WTC11 (cell line): ENCODE measurements at regions of chr14 and their contacts with region 1.

Region 1: GRCh38 chr14:21917699-21918436 is 244.2 kb upstream of the OR4E1 start:
- DNase-seq: peak; percentile 31
- ATAC-seq: peak; percentile 66
- H3K4me3 Mint-ChIP-seq: no peak overlapping the region
- H3K27ac Mint-ChIP-seq: no peak overlapping the region
- H3K4me1 Mint-ChIP-seq: no peaks in the 10 kb centered on the region
- H3K27me3 Mint-ChIP-seq: peaks cover 10% of the 10 kb centered on the region
- CTCF ChIP-seq: peak; percentile 37; the same call in 1 of the 2 replicates

Region 2: DNA sequence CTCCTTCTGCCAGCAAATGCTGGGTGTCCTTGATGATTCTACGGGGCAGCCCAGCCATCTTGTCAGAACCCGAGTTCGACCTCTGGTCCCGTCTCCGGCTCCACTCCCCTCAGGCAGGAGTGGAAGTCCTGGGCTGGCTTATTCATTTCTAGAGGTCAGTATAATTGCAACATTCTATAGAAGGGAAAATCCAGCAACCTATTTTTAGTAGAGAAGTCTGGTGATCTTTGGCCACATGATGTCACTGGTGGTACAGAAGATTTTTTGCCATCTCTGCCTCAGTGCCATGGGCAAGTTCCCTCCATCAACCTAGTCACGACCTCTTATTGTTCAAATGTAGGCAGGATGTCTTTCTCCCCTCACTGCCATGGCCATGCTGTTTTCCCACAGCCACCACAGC is 305.5 kb before region 1 on chr14:
- CTCF ChIA-PET with region 1: no interaction called
- POLR2A ChIA-PET with region 1: no interaction called
- DNase-seq: no peak
- ATAC-seq: peak; percentile 32; the same call in 1 of the 2 replicates
- H3K4me3 Mint-ChIP-seq: no peak overlapping the region
- H3K27ac Mint-ChIP-seq: no peak overlapping the region
- H3K4me1 Mint-ChIP-seq: peaks cover 16% of the 10 kb centered on the region
- H3K27me3 Mint-ChIP-seq: no peaks in the 10 kb centered on the region
- CTCF ChIP-seq: no peak

Region 3: GRCh38 chr14:21852061-21852664 is 65.7 kb before region 1 on chr14:
- CTCF ChIA-PET with region 1: interaction called, 20 read pairs
- POLR2A ChIA-PET with region 1: no interaction called
- DNase-seq: peak; percentile 77
- ATAC-seq: peak; percentile 83
- H3K4me3 Mint-ChIP-seq: no peak overlapping the region
- H3K27ac Mint-ChIP-seq: no peak overlapping the region
- H3K4me1 Mint-ChIP-seq: no peaks in the 10 kb centered on the region
- H3K27me3 Mint-ChIP-seq: peaks cover 20% of the 10 kb centered on the region
- CTCF ChIP-seq: peak; percentile 30

Region 4: GRCh38 chr14:21894003-21894897 is 23.6 kb before region 1 on chr14:
- CTCF ChIA-PET with region 1: interaction called, 14 read pairs
- POLR2A ChIA-PET with region 1: no interaction called
- DNase-seq: peak; percentile 62
- ATAC-seq: peak; percentile 98
- H3K4me3 Mint-ChIP-seq: no peak overlapping the region
- H3K27ac Mint-ChIP-seq: no peak overlapping the region
- H3K4me1 Mint-ChIP-seq: no peaks in the 10 kb centered on the region
- H3K27me3 Mint-ChIP-seq: no peaks in the 10 kb centered on the region; the same call in 1 of the 2 replicates
- CTCF ChIP-seq: peak; percentile 27; the same call in 1 of the 2 replicates

Region 5: GRCh38 chr14:21902650-21903103 is 15.2 kb before region 1 on chr14:
- CTCF ChIA-PET with region 1: interaction called, 30 read pairs
- POLR2A ChIA-PET with region 1: no interaction called
- DNase-seq: no peak
- ATAC-seq: no peak
- H3K4me3 Mint-ChIP-seq: no peak overlapping the region
- H3K27ac Mint-ChIP-seq: no peak overlapping the region
- H3K4me1 Mint-ChIP-seq: no peaks in the 10 kb centered on the region
- H3K27me3 Mint-ChIP-seq: peaks cover 5% of the 10 kb centered on the region
- CTCF ChIP-seq: no peak

Region 6: GRCh38 chr14:21933681-21934080 is 15.8 kb after region 1 on chr14:
- CTCF ChIA-PET with region 1: interaction called, 30 read pairs
- POLR2A ChIA-PET with region 1: no interaction called
- DNase-seq: no peak
- ATAC-seq: 0 out of 2 replicates have a peak, but pooled peaks have one; percentile 16
- H3K4me3 Mint-ChIP-seq: no peak overlapping the region
- H3K27ac Mint-ChIP-seq: no peak overlapping the region
- H3K4me1 Mint-ChIP-seq: peaks cover 14% of the 10 kb centered on the region
- H3K27me3 Mint-ChIP-seq: no peaks in the 10 kb centered on the region; the same call in 1 of the 2 replicates
- CTCF ChIP-seq: no peak

Region 7: DNA sequence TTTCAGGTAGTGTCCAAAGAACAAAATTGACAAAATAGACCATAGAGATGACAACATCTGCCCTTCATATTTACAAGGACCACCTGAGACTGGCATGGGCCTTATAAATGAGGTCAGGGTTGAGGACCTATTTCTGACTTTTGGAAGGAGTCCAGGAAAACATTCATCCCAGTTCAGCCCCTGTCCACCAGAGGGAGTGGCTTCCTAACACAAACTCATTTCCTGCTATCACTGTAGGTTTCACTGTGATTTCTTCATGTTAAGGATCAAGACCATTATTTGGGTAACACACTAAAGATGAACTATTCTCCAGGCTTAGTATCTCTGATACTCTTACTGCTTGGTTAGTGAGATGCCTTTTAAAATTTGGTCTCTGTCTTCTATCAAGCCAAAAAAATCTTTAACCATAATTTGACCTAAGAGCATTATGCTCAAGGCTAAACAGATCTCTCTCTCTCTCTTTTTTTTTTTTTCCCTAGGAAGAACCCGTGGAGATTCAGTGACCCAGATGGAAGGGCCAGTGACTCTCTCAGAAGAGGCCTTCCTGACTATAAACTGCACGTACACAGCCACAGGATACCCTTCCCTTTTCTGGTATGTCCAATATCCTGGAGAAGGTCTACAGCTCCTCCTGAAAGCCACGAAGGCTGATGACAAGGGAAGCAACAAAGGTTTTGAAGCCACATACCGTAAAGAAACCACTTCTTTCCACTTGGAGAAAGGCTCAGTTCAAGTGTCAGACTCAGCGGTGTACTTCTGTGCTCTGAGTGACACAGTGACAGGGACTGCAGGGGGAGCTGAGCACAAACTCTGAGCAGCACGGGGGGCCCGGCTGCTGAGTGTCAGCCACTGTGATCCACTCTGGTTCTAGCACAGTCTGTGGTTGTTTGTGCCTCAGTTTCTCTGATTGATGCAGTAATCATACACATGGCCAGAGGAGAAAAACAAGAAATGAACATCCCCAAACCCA is 23.3 kb after region 1 on chr14:
- CTCF ChIA-PET with region 1: interaction called, 10 read pairs
- POLR2A ChIA-PET with region 1: no interaction called
- DNase-seq: peak; percentile 36
- ATAC-seq: peak; percentile 76
- H3K4me3 Mint-ChIP-seq: no peak overlapping the region
- H3K27ac Mint-ChIP-seq: no peak overlapping the region
- H3K4me1 Mint-ChIP-seq: peaks cover 13% of the 10 kb centered on the region
- H3K27me3 Mint-ChIP-seq: no peaks in the 10 kb centered on the region; the same call in 1 of the 2 replicates
- CTCF ChIP-seq: peak; percentile 57

Region 8: GRCh38 chr14:21987937-21988336 is 70.1 kb after region 1 on chr14:
- CTCF ChIA-PET with region 1: interaction called, 12 read pairs
- POLR2A ChIA-PET with region 1: no interaction called
- DNase-seq: peak; percentile 27
- ATAC-seq: peak; percentile 77
- H3K4me3 Mint-ChIP-seq: no peak overlapping the region
- H3K27ac Mint-ChIP-seq: no peak overlapping the region
- H3K4me1 Mint-ChIP-seq: no peaks in the 10 kb centered on the region
- H3K27me3 Mint-ChIP-seq: peaks cover 4% of the 10 kb centered on the region; the same call in 1 of the 2 replicates
- CTCF ChIP-seq: peak; percentile 35; the same call in 1 of the 2 replicates